Testis (tissue), 5 donors: ENCODE measurements at regions of chr14 and their contacts with region 1.

Region 1: GRCh38 chr14:67359775-67360648 is at the starts of genes ATP6V1D and EIF2S1:
- DNase-seq: peak; percentile 99
- H3K4me3 ChIP-seq: peak within 1 kb of the TSS; percentile 73 to 92
- H3K27ac ChIP-seq: peak within 1 kb of the TSS; percentile 87 to 95
- H3K4me1 ChIP-seq: peaks cover 28% of the 10 kb centered on the region
- H3K27me3 ChIP-seq: no peaks in the 10 kb centered on the region
- CTCF ChIP-seq: peak; percentile 94 to 99 (median 99)
- POLR2A ChIP-seq: no peak
- total RNA-seq, gene ATP6V1D: 75.6 to 103 TPM
- total RNA-seq, gene EIF2S1: 82.1 to 83.9 TPM

Region 2: GRCh38 chr14:67166450-67166853 is 193.6 kb before region 1 on chr14:
- intact Hi-C with region 1: no loop called
- DNase-seq: peak; percentile 55
- H3K4me3 ChIP-seq: no peak overlapping the region
- H3K27ac ChIP-seq: no peak overlapping the region
- H3K4me1 ChIP-seq: no peaks in the 10 kb centered on the region
- H3K27me3 ChIP-seq: no peaks in the 10 kb centered on the region
- CTCF ChIP-seq: peak; percentile 52 to 62 (median 53)
- POLR2A ChIP-seq: no peak

Region 3: DNA sequence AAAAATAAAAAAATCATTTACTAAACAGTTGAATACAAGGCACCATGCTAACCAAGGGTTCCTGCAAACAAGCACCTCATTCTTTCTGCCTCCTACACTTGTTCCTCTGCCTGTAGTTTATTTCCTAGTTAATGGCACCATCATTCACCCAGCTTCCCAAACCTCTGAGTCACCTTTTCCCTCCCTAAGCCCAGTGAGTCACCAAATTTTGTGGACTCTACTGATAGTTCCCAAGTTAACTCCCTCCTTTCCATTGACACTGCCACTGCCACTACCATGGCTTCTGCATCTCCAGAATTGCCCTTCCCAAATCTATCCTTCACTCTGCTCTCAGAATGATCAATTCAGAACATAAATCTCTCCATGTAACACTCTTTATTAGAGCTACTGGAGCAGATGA is 172.8 kb before region 1 on chr14:
- intact Hi-C with region 1: no loop called
- DNase-seq: no peak
- H3K4me3 ChIP-seq: no peak overlapping the region
- H3K27ac ChIP-seq: no peak overlapping the region
- H3K4me1 ChIP-seq: no peaks in the 10 kb centered on the region
- H3K27me3 ChIP-seq: no peaks in the 10 kb centered on the region
- CTCF ChIP-seq: no peak
- POLR2A ChIP-seq: no peak

Region 4: GRCh38 chr14:67240978-67241414 is 119.0 kb before region 1 on chr14:
- intact Hi-C with region 1: loop called (anchors 5 kb)
- DNase-seq: peak; percentile 97
- H3K4me3 ChIP-seq: peak overlapping the region; percentile 81 to 93
- H3K27ac ChIP-seq: peak overlapping the region; percentile 95 to 98
- H3K4me1 ChIP-seq: peaks cover 9% of the 10 kb centered on the region
- H3K27me3 ChIP-seq: no peaks in the 10 kb centered on the region
- CTCF ChIP-seq: no peak
- POLR2A ChIP-seq: no peak